ENCODE measurements at regions of chr1 and their contacts with region 1.

Region 1: DNA sequence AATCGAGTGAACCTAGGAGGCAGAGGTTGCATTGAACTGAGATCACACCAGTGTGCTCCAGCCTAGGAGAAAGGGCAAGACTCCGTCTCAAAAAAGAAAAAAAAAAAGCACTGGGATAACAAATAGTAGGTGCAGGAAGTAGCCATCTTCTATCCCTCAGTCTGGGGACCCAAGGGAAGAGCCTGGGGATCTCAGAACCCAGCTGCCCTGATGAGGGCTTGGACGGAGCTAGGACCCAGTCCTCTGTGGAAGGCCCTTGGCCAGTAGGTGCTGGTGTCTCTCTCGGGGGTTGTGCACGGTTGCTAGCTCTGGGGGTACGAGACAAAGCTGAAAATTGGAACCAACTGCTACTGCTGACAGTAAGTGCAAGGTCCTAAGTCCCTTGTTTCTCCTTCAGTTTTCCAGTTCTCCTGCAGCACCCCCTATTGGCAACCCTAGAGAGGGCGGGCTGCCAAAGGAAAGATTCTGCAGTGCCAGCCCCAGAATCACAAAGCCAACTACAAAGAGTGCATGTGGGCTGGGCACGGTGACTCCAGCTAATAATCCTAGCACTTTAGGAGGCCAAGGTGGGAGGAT is 57.6 kb upstream of the KIF1B start:
- DNase-seq: peak; percentile 54
- CTCF ChIP-seq: peak; percentile 57

Region 2: GRCh38 chr1:9985001-9985400 is 167.8 kb before region 1 on chr1:
- CTCF ChIA-PET with region 1: no interaction called
- POLR2A ChIA-PET with region 1: no interaction called
- DNase-seq: no peak
- CTCF ChIP-seq: no peak

Region 3: GRCh38 chr1:10045480-10046355 is 107.1 kb before region 1 on chr1:
- CTCF ChIA-PET with region 1: no interaction called
- POLR2A ChIA-PET with region 1: no interaction called
- DNase-seq: no peak
- CTCF ChIP-seq: no peak

Region 4: GRCh38 chr1:10140981-10141380 is 11.8 kb before region 1 on chr1:
- CTCF ChIA-PET with region 1: interaction called, 12 read pairs
- POLR2A ChIA-PET with region 1: no interaction called
- DNase-seq: no peak
- CTCF ChIP-seq: no peak

Measured in GM10248 (cell line).